Ovary (tissue), 10 donors: ENCODE measurements at regions of chr3 and their contacts with region 1.

Region 1: GRCh38 chr3:149129326-149130205 is at the start of gene HPS3:
- DNase-seq: peak; percentile 89 to 94 (median 91)
- H3K4me3 ChIP-seq: peak within 1 kb of the TSS; percentile 83
- H3K27ac ChIP-seq: peak within 1 kb of the TSS; percentile 64 to 86
- H3K4me1 ChIP-seq: peaks cover 5% of the 10 kb centered on the region
- H3K27me3 ChIP-seq: no peaks in the 10 kb centered on the region
- CTCF ChIP-seq: no peak
- EP300 ChIP-seq: no peak
- POLR2A ChIP-seq: peak; percentile 95
- total RNA-seq, gene HPS3: 15.7 to 25.2 (median 17.9) TPM

Region 2: DNA sequence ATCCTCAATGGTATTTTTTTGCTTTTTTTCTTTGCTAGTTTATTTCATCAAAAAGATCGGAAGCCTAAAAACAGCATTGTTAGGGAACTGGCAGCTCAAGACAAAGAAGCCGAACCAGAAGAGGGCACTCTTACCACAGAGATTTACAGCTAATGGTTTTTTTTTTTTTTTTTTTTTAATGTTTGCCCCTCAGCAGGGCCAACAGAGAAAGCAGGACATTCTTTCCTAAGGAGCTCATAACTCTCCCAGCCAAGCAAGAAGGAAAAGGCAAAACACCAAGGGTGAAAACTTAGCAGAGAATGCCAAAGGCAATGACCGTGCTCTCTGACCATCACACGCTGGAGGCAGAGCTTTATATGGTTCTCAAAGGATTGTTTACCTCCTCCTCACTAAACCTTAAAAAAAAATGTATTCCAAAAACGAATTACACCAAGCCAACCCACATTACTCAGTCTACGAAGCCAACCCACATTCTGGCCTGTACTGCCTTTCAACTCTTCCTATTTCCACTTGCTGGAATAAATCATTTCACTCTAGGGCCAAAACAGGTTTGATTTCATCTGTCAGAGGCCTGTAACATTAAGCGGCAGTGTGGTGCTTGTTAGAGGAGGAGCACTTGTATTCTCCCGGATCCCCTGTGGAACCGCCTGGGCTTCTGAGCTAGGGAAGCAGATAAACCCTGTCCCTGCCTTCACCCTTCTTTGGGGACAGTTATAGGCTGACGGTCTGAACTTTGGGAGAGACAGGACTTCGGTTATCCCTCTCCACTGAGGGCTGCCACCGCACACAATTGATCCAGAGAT is 173.8 kb before region 1 on chr3:
- intact Hi-C with region 1: loop called in 2 of 4 experiments (anchors 5 to 10 kb)
- DNase-seq: peak; percentile 53 to 79 (median 62)
- H3K4me3 ChIP-seq: no peak overlapping the region
- H3K27ac ChIP-seq: peak overlapping the region; percentile 87 to 95
- H3K4me1 ChIP-seq: peaks cover 12% of the 10 kb centered on the region
- H3K27me3 ChIP-seq: no peaks in the 10 kb centered on the region
- CTCF ChIP-seq: peak; percentile 28 to 62 (median 34)
- EP300 ChIP-seq: no peak
- POLR2A ChIP-seq: no peak

Region 3: GRCh38 chr3:149009732-149010131 is 119.8 kb before region 1 on chr3:
- intact Hi-C with region 1: no loop called
- DNase-seq: no peak
- H3K4me3 ChIP-seq: no peak overlapping the region
- H3K27ac ChIP-seq: no peak overlapping the region
- H3K4me1 ChIP-seq: no peaks in the 10 kb centered on the region
- H3K27me3 ChIP-seq: no peaks in the 10 kb centered on the region
- CTCF ChIP-seq: no peak
- EP300 ChIP-seq: no peak
- POLR2A ChIP-seq: no peak

Region 4: DNA sequence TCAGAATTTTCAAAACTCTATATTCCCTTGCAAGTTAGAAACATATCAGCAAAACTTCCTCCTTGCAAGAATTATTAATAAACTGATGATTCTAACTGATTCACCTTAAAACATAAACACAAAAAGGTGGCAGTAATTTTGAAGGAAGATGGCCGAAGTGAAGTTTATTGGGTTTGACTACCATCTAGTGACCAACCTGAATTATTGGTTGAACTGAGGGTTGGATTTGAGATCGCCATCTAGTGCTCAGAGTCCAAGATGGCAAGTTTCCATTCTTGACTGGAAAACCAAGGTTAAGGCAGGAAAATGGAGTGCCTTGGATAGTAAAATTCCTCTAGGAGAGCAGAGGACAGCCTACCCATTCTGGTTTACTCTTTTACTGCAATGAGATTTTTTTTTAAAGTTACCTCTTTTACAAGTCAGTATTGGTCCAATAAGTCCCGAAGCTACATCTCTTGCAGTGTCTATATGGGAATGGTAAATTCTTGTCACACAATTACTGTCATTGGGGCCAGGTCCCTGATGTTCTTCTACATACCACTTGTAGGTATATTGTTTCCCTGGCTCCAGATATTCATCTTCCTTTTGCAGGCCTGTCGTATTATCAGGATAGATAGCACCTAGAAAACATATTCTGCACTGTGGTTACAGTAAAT is 143.7 kb after region 1 on chr3:
- intact Hi-C with region 1: loop called in 1 of 4 experiments (anchors 5 kb)
- DNase-seq: peak in 2 of 5 donors; percentile 31 to 68
- H3K4me3 ChIP-seq: no peak overlapping the region
- H3K27ac ChIP-seq: no peak overlapping the region
- H3K4me1 ChIP-seq: no peaks in the 10 kb centered on the region
- H3K27me3 ChIP-seq: no peaks in the 10 kb centered on the region
- CTCF ChIP-seq: peak; percentile 89 to 97 (median 96)
- EP300 ChIP-seq: no peak
- POLR2A ChIP-seq: no peak

Region 5: GRCh38 chr3:149473357-149474249 is 344.0 kb after region 1 on chr3:
- intact Hi-C with region 1: loop called in 1 of 4 experiments (anchors 10 kb)
- DNase-seq: peak in 3 of 5 donors; percentile 55 to 58 (median 57)
- H3K4me3 ChIP-seq: no peak overlapping the region
- H3K27ac ChIP-seq: peak overlapping the region in 1 of 2 donors; percentile 11
- H3K4me1 ChIP-seq: peaks cover 3% of the 10 kb centered on the region
- H3K27me3 ChIP-seq: no peaks in the 10 kb centered on the region
- CTCF ChIP-seq: no peak
- EP300 ChIP-seq: no peak
- POLR2A ChIP-seq: no peak

Region 6: DNA sequence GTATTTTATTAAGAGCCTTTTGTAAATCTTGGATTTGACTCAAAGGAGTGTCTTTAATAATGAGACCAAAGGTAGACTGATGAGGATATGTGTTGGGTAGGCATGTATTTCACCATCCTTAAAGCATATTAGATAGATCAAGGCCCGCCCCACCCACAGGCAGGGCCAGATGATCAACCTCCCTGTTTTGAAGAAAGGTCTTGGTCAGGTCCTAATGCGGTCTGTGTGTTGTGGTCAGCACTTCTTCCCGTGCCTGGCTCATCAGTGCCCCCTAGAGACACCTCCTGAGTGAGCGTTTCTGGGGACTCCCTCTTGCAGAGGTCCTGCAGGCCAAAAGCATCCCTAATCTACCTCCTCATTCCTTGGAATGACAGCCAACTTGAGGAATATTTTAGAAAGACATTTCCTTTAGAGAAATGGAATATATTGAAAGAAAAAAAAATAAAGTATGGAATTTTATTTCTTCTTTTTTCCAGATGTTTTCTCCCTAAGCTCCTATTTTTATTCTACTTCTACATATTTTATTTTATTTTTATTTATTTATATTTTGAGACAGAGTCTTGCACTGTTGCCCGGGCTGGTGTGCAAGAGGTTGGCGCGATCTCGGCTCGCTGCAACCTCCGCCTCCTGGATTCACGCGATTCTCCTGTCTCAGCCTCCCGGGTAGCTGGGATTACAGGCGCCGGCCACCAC is 350.9 kb after region 1 on chr3:
- intact Hi-C with region 1: loop called in 2 of 4 experiments (anchors 10 kb)
- DNase-seq: peak; percentile 55 to 81 (median 70)
- H3K4me3 ChIP-seq: no peak overlapping the region
- H3K27ac ChIP-seq: no peak overlapping the region
- H3K4me1 ChIP-seq: no peaks in the 10 kb centered on the region
- H3K27me3 ChIP-seq: no peaks in the 10 kb centered on the region
- CTCF ChIP-seq: peak; percentile 26 to 71 (median 26)
- EP300 ChIP-seq: no peak
- POLR2A ChIP-seq: no peak

Region 7: GRCh38 chr3:149717391-149718056 is 588.0 kb after region 1 on chr3:
- intact Hi-C with region 1: loop called in 1 of 4 experiments (anchors 10 kb)
- DNase-seq: peak in 4 of 5 donors; percentile 42 to 80 (median 50)
- H3K4me3 ChIP-seq: no peak overlapping the region
- H3K27ac ChIP-seq: peak overlapping the region in 1 of 2 donors; percentile 13
- H3K4me1 ChIP-seq: peaks cover 3% of the 10 kb centered on the region
- H3K27me3 ChIP-seq: no peaks in the 10 kb centered on the region
- CTCF ChIP-seq: peak; percentile 77 to 82 (median 79)
- EP300 ChIP-seq: no peak
- POLR2A ChIP-seq: no peak